ENCODE measurements at regions of chr1 and their contacts with region 1.

Region 1: GRCh38 chr1:204480515-204480914 is 14.1 kb downstream of the PIK3C2B start:
- DNase-seq: peak; percentile 84
- H3K4me3 ChIP-seq: peak overlapping the region; percentile 31
- H3K27ac ChIP-seq: peak overlapping the region; percentile 87
- H3K4me1 ChIP-seq: peaks cover 52% of the 10 kb centered on the region
- CTCF ChIP-seq: peak; percentile 65

Region 2: GRCh38 chr1:204446370-204447111 is 34.0 kb before region 1 on chr1:
- CTCF ChIA-PET with region 1: interaction called, 13 read pairs
- POLR2A ChIA-PET with region 1: interaction called, 6 read pairs
- intact Hi-C with region 1: no loop called
- DNase-seq: peak; percentile 88
- H3K4me3 ChIP-seq: no peak overlapping the region
- H3K27ac ChIP-seq: no peak overlapping the region
- H3K4me1 ChIP-seq: peaks cover 30% of the 10 kb centered on the region
- CTCF ChIP-seq: peak; percentile 83

Region 3: DNA sequence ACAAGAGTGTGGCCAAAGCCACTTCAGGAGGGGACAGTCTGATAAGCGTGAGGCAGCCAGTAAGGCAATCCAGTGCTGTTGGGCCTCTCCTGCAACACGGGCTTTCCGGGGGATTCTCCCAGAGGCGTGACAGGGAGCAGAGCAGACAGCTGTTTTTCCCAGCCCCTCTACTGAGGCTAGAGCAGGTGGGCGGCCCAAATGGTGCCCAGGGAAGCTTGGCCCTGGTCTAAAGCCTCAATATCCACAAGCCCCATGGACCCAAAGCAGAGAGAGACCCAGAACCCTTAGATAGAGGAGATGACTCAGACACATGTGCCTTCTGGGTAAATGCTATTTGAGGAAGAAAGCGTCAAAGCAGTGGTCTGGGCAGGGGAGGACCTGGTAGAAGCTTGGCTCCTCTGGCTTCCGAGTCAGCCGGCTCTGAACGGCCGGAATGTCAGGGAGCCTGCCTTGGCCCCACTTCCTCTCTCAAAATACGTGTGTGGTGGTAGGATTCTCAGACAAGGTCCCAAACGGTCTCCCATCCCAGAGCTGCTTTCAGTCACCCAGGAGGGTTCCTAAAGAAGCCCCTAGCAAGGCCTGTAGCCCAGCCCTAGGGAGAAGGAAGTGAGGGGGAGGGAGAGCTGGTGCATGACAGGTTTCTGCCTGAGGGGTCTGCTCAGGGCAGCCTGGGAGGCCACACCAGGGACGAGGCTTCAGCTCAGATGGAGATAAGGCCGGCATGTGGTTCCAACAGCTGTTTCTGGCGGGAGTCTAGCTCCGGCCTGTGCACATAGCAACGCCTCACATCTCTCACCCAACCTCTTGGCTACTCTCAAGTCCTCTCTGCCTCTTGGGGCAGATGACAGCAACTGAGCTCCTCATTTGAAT is 14.7 kb before region 1 on chr1:
- CTCF ChIA-PET with region 1: interaction called, 11 read pairs
- POLR2A ChIA-PET with region 1: interaction called, 55 read pairs
- intact Hi-C with region 1: no loop called
- DNase-seq: peak; percentile 51
- H3K4me3 ChIP-seq: no peak overlapping the region
- H3K27ac ChIP-seq: no peak overlapping the region
- H3K4me1 ChIP-seq: peaks cover 56% of the 10 kb centered on the region
- CTCF ChIP-seq: no peak